ENCODE measurements at regions of chr11 and their contacts with region 1.

Region 1: GRCh38 chr11:57644748-57645688 is 4.7 kb downstream of the YPEL4 start:
- DNase-seq: no peak
- H3K4me3 ChIP-seq: no peak overlapping the region
- H3K27ac ChIP-seq: peak overlapping the region; percentile 11
- H3K27me3 ChIP-seq: peaks cover 21% of the 10 kb centered on the region
- CTCF ChIP-seq: peak; percentile 86

Region 2: DNA sequence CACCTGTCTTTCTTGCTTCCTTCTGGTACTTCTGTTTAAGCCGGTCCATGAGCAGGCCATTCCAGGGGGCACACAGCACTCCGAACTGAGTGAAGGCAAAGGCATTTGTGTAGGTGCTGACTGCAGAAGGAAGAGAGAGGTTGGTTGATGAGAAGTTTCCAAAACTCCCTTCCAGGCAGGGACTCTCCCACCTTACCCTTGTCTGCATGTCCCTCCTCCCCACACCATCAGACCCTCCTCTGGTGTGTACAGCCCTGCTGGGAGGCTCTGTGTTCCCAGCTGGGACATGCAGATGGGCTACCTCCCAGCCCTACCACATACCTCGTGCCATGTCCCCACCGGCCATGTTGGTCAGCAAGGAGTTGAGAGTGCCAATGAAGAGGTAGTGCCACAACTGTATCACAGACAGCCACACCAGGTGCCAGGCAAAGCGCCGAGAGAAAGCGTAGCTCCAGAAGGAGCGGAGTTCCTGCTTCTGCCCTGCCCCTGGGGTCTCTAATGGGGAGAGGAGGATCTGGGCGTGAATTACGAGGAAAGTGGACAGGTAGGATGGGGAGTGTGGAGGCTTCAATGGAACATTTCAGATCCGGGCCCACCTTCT is 230.3 kb before region 1 on chr11:
- CTCF ChIA-PET with region 1: no interaction called
- POLR2A ChIA-PET with region 1: no interaction called
- DNase-seq: no peak
- H3K4me3 ChIP-seq: no peak overlapping the region
- H3K27ac ChIP-seq: no peak overlapping the region
- H3K27me3 ChIP-seq: no peaks in the 10 kb centered on the region
- CTCF ChIP-seq: no peak

Region 3: DNA sequence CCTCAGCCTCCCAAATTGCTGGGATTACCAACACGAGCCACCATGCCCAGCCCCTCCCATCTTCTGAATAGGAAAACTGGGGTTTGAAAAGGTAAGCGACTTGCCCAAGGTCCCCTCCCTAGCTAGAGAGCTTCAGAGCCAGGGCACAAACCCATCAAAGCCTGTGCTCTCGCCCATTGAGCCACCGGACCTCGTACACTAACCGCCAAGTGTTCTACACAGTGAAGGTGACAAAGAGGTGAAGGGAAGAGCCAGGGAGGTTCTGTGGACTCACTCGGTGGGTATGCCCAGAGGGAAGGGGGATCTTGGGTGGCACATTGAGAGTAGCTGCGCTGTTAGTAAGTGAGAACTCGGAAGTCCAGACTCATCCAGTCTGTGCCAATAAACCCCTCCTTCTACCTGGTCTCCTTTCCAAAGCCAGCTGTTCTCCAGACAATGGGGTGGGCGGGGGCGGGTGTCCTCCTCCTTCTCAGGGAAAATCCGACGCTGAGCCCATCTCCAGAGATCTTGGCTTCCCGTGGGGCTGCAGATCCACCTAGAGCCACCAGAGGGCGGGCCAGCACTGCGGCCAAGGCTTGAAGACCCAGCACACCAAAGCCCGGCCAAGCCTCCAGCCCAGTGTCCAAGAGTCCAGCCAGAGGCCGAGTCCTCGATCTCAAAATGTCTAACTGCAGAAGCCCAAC is 187.9 kb before region 1 on chr11:
- CTCF ChIA-PET with region 1: interaction called, 50 read pairs
- POLR2A ChIA-PET with region 1: no interaction called
- DNase-seq: peak; percentile 59
- H3K4me3 ChIP-seq: no peak overlapping the region
- H3K27ac ChIP-seq: no peak overlapping the region
- H3K27me3 ChIP-seq: peaks cover 42% of the 10 kb centered on the region
- CTCF ChIP-seq: peak; percentile 98

Region 4: DNA sequence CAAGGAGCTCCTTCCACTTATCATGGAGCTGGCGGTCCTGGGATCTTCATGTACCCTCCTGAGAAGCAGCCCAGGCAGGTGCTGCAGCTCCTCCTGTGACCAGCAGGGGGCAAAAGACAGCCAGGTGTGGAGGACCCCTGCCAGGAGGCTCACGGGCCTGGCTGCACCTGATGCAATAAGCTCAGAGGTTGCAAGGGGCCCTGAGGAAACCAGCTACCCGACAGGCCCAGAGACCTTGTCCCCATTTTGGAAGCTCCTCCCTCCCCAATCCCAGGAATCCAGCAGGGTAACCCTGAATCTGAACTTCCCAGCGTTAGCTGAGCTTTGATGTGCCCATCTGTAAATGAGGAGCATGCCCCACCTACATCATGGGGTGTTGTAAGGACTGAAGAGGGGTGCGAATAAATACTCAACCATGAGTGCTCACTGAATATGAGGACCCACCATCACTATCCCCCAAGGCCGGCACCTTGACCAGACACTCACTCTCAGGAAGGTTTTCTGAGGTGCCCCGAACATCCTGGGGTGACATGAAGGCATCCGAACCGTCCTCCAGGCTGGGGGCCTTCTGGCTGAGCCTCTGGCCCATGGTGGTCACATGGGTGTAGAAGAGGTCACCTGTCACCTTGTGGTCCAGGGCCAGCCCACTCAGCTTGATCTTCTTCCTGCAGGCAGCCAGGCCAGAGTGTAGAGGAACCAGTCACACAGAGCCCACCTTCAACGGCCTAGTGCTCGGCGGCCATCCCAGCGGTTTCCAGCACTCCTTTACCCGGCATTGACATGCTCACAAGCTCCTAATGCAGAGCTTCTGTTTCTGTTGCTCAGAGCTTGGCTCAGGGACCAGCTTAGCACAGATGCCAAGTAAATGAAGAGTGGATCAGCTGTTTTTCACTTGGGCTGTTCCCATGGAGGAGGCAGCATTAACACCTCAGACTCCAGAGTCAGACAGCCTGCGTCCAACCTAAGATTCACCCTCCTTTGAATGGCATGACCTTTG is 151.2 kb before region 1 on chr11:
- CTCF ChIA-PET with region 1: interaction called, 24 read pairs
- POLR2A ChIA-PET with region 1: no interaction called
- DNase-seq: no peak
- H3K4me3 ChIP-seq: no peak overlapping the region
- H3K27ac ChIP-seq: peak overlapping the region; percentile 31
- H3K27me3 ChIP-seq: no peaks in the 10 kb centered on the region
- CTCF ChIP-seq: peak; percentile 87

Region 5: GRCh38 chr11:57546869-57547475 is 98.0 kb before region 1 on chr11:
- CTCF ChIA-PET with region 1: interaction called, 23 read pairs
- POLR2A ChIA-PET with region 1: no interaction called
- DNase-seq: no peak
- H3K4me3 ChIP-seq: no peak overlapping the region
- H3K27ac ChIP-seq: no peak overlapping the region
- H3K27me3 ChIP-seq: peaks cover 8% of the 10 kb centered on the region
- CTCF ChIP-seq: peak; percentile 34

Region 6: GRCh38 chr11:57562596-57562995 is 82.4 kb before region 1 on chr11:
- CTCF ChIA-PET with region 1: interaction called, 227 read pairs
- POLR2A ChIA-PET with region 1: interaction called, 11 read pairs
- DNase-seq: no peak
- H3K4me3 ChIP-seq: no peak overlapping the region
- H3K27ac ChIP-seq: no peak overlapping the region
- H3K27me3 ChIP-seq: no peaks in the 10 kb centered on the region
- CTCF ChIP-seq: no peak

Region 7: DNA sequence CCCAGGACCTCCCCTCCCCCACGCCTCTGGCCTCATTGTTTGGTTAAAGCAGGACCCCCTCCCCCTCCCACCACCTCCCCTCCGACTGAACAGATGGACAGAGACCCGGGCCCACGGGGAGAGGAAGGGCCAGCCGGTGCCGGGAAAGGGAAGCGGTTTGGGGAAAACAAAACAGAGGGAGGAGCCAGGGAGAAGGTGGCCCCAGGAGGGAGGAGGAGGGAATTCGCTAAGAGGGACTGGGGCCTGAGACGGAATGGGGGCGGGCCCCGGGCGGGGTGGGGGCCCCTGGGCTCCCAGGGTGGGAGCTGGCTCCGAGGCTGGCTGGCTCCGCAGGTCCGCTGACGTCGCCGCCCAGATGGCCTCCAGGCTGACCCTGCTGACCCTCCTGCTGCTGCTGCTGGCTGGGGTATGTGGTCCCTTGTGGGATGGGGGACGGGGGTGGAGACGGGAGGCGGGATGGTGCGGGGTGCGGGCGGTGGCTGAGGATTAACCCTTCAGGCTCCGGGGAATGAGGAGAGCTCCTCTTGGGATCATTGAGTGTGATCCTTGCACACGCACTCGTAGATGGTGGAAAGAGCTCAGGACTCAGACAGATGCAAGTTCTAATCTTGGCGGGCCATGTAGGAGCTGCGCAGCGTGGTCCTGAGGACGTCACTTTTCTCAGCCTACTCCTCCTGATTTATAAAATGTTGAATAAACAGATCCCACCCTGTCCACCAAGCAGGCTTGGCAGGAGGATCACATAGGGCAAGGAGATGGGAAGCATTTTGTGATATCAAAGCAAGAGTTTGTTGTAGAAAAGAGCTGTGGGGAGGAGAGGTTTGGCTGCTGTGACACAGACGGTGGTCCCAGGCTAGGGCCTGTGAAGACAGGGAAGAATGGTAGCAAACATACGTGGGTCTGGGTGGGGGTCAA is 46.8 kb before region 1 on chr11:
- CTCF ChIA-PET with region 1: interaction called, 33 read pairs
- POLR2A ChIA-PET with region 1: no interaction called
- DNase-seq: no peak
- H3K4me3 ChIP-seq: peak overlapping the region; percentile 57
- H3K27ac ChIP-seq: no peak overlapping the region
- H3K27me3 ChIP-seq: peaks cover 18% of the 10 kb centered on the region
- CTCF ChIP-seq: no peak

Region 8: DNA sequence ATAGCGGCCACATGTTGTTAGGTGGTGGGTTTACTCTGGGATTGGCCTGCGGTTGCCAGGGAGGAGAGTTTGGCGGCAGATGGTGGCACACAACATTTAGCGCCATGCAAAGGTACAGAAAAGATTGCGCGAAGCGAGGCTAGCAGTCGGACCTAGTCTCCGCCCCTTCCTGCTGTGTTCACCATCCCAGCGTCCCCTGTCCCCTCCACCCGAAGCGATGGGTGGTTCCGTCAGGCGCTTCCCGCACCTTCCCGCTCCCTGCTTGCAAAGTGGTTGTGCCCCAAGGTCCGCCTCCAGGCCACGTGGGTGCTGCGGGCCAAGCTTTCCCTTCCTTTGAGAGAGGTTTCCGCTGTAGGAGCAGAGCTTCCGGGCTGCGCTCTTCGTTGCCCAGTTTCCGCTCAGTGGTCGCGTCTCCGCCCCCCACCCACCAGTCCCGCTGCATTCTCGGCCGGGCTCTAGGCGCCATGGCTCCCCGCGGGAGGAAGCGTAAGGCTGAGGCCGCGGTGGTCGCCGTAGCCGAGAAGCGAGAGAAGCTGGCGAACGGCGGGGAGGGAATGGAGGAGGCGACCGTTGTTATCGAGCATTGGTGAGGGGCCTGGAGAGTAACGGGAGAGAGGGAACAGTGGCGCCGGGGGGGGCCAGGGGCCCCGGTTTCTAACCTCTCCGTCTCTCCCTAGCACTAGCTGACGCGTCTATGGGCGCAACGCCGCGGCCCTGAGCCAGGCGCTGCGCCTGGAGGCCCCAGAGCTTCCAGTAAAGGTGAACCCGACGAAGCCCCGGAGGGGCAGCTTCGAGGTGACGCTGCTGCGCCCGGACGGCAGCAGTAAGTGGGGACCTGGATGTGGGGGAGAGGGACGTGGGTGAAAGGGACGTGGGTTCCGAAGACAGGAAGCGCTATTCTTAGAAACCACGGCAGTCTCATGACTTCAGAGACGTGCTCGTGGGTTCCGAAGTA is 96.4 kb after region 1 on chr11 and contains the start of gene SELENOH:
- CTCF ChIA-PET with region 1: no interaction called
- POLR2A ChIA-PET with region 1: no interaction called
- DNase-seq: peak; percentile 94
- H3K4me3 ChIP-seq: peak within 1 kb of the TSS; percentile 96
- H3K27ac ChIP-seq: peak within 1 kb of the TSS; percentile 89
- H3K27me3 ChIP-seq: no peaks in the 10 kb centered on the region
- CTCF ChIP-seq: no peak
- polyA plus RNA-seq, gene SELENOH: 94.8 and 104 TPM in 2 replicates

Region 9: GRCh38 chr11:58524232-58525036 is 879.4 kb after region 1 on chr11:
- CTCF ChIA-PET with region 1: interaction called, 12 read pairs
- POLR2A ChIA-PET with region 1: no interaction called
- DNase-seq: peak; percentile 80
- H3K4me3 ChIP-seq: no peak overlapping the region
- H3K27ac ChIP-seq: no peak overlapping the region
- H3K27me3 ChIP-seq: no peaks in the 10 kb centered on the region
- CTCF ChIP-seq: peak; percentile 89

Measured in AG04450 (cell line).